ENCODE measurements at regions of chr7 and their contacts with region 1.

Region 1: GRCh38 chr7:37208528-37208927 is 240.1 kb downstream of the ELMO1 start:
- DNase-seq: peak; percentile 63
- H3K4me3 Mint-ChIP-seq: no peak overlapping the region
- H3K27ac Mint-ChIP-seq: no peak overlapping the region
- H3K4me1 Mint-ChIP-seq: no peaks in the 10 kb centered on the region
- H3K27me3 Mint-ChIP-seq: peaks cover 48% of the 10 kb centered on the region
- CTCF ChIP-seq: peak; percentile 48

Region 2: DNA sequence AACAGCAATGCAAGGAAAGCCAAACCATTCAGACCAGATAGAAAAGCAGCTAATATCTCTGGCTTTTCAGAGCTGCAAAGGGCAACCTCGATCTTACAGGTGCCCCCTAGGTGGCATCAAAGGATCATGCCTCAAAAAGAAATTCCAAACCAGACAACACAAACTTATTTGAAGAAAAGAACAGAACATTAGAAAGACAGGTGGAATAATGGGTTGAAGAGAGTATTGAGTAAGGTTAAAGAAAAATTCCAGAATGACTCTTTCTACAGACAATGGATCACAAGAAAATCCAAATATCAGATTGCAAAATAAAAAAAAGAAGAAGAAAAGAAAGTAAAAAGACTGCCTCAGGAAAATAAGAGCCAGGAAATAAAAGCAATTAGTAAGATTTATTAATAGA is 26.4 kb after region 1 on chr7:
- CTCF ChIA-PET with region 1: no interaction called
- intact Hi-C with region 1: no loop called
- DNase-seq: peak; percentile 43
- H3K4me3 Mint-ChIP-seq: no peak overlapping the region
- H3K27ac Mint-ChIP-seq: no peak overlapping the region
- H3K4me1 Mint-ChIP-seq: no peaks in the 10 kb centered on the region
- H3K27me3 Mint-ChIP-seq: peaks cover 55% of the 10 kb centered on the region
- CTCF ChIP-seq: peak; percentile 57

Region 3: GRCh38 chr7:37275078-37275710 is 66.7 kb after region 1 on chr7:
- CTCF ChIA-PET with region 1: no interaction called
- intact Hi-C with region 1: no loop called
- DNase-seq: no peak
- H3K4me3 Mint-ChIP-seq: no peak overlapping the region
- H3K27ac Mint-ChIP-seq: no peak overlapping the region
- H3K4me1 Mint-ChIP-seq: no peaks in the 10 kb centered on the region
- H3K27me3 Mint-ChIP-seq: peaks cover 25% of the 10 kb centered on the region
- CTCF ChIP-seq: no peak

Region 4: DNA sequence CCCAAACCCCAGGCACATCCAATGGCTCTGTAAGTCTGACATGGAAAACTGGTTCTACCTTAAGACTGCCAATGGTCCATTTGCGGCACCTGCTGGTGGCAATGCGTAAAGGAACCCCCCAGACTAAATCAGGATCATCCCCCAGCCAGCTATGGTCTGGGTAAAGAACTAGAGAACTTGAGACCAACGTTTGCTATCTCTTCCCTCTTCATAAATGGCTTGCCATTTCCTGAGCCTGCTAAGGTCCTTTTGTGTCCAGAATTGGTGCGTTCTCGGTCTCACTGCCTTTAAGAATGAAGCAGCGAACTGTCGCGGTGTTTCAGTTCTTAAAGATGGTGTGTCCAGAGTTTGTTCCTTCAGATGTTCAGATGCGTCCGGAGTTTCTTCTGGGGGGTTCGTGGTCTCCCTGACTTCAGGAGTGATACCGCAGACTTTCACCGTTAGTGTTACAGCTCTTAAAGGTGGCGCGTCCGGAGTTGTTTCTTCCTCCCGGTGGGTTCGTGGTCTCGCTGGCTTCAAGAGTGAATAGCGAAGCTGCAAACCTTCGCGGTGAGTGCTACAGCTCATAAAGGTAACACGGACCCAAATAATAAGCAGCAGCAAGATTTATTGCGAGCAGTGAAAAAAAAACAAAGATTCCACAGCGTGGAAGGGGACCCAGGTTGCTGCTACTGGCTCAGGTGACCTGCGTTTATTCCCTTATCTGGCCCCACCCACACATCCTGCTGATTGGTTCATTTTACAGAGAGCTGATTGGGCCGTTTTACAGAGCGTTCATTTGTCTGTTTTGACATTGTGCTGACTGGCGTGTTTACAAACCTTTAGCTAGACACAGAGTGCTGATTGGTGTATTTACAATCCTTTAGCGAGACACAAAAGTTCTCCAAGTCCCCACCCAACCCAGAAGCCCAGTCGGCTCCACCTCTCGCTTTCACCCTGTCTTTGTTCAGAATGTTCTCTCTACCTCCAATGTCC is 144.7 kb after region 1 on chr7:
- CTCF ChIA-PET with region 1: interaction called, 3 read pairs
- intact Hi-C with region 1: loop called (anchors 2 kb)
- DNase-seq: peak; percentile 61
- H3K4me3 Mint-ChIP-seq: no peak overlapping the region
- H3K27ac Mint-ChIP-seq: no peak overlapping the region
- H3K4me1 Mint-ChIP-seq: no peaks in the 10 kb centered on the region
- H3K27me3 Mint-ChIP-seq: no peaks in the 10 kb centered on the region
- CTCF ChIP-seq: peak; percentile 53

Region 5: DNA sequence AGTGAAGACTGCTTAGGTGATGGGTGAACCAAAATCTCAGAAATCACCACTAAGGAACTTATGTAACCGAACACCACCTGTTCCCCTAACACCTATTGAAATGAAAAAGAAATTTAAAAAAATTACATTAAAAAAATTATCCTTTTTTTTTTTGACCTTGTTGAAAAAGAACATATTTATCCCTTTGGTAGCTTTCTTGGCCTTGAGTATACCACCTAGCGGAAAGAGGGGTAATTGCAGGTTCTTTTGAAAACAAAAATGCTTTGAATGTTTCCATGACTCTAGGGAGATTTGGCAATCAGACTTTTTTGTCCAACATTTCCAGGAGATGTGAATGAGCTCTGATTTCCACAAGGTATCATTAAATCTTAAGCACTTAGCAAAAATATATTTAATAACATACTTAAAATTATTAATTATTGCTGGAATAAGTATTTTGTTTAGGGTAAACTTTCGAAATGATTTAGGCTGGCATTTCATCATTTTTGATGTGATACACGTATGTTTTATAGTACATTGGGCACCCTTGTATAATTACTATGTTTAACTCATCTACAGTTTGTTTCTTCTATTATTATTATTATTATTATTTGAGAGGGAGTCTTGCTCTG is 287.2 kb after region 1 on chr7:
- CTCF ChIA-PET with region 1: interaction called, 9 read pairs
- intact Hi-C with region 1: loop called (anchors 1 kb)
- DNase-seq: no peak
- H3K4me3 Mint-ChIP-seq: no peak overlapping the region
- H3K27ac Mint-ChIP-seq: no peak overlapping the region
- H3K4me1 Mint-ChIP-seq: no peaks in the 10 kb centered on the region
- H3K27me3 Mint-ChIP-seq: no peaks in the 10 kb centered on the region
- CTCF ChIP-seq: peak; percentile 61

Region 6: DNA sequence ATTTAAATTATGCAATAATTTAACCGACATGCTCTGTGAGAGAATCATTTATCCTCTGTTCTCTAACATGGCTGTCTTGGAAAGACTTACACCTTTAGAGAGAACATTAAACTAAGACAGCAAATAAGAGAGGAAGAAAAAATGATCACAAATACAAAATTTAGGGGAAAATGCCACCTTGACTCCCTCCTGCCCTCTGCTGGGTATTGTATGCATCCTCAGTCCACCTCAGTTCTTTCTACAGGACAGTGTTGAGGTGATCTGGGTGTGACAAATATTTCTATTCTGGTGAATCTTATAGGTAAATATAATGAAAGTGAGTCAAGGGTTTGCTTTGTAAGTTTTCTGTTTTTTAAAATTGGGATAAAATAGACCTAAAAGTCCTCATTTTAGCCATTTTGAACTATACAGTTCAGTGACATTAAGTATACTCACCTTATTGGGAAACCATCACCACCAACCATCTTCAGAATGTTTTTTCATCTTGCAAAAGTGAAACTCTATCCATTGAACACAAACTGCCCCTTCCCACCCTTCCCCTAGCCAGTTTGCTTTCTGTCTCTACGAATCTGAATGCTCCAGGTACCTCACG is 301.6 kb after region 1 on chr7:
- CTCF ChIA-PET with region 1: no interaction called
- intact Hi-C with region 1: loop called (anchors 1 kb)
- DNase-seq: peak; percentile 27
- H3K4me3 Mint-ChIP-seq: no peak overlapping the region
- H3K27ac Mint-ChIP-seq: no peak overlapping the region
- H3K4me1 Mint-ChIP-seq: no peaks in the 10 kb centered on the region
- H3K27me3 Mint-ChIP-seq: peaks cover 11% of the 10 kb centered on the region
- CTCF ChIP-seq: peak; percentile 61

Region 7: DNA sequence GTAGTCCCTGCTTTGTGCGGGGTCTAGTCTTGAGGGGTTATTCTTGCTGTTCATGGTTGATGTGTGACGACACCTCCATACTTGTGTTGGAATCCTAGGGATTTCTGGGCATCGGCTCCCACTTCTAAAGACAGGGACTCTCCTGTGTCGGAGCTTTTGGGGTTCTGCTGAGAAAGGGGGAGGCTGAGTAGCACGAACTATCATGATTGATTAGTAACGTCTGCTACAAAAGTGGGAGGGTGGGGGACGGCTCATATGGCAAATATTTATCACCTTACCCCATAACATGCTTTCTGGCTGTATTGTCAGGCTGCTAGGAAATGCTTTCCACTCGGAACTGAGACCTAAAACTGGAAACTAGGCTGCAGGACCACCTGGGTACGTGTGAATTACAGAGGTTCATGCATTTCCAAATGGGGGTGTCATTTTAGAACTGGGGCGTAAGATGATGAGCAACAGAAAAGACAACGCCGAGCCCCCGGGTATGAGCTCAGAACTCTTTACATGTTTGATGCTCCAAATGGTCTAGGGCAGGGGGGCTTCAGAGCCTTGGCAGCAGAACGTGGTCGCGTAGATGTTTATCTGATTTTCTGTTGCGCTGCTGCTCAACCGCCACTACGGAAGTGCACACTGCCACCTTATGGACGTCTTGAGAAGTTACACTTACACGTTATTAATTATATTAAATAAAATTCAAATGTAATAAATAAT is 624.7 kb after region 1 on chr7:
- CTCF ChIA-PET with region 1: interaction called, 6 read pairs
- intact Hi-C with region 1: loop called (anchors 1 kb)
- DNase-seq: peak; percentile 59
- H3K4me3 Mint-ChIP-seq: peak overlapping the region; percentile 72
- H3K27ac Mint-ChIP-seq: no peak overlapping the region
- H3K4me1 Mint-ChIP-seq: peaks cover 16% of the 10 kb centered on the region
- H3K27me3 Mint-ChIP-seq: peaks cover 25% of the 10 kb centered on the region
- CTCF ChIP-seq: peak; percentile 67

Measured in Calu3 (cell line).